GM10248 (cell line): ENCODE measurements at regions of chr11 and their contacts with region 1.

Region 1: DNA sequence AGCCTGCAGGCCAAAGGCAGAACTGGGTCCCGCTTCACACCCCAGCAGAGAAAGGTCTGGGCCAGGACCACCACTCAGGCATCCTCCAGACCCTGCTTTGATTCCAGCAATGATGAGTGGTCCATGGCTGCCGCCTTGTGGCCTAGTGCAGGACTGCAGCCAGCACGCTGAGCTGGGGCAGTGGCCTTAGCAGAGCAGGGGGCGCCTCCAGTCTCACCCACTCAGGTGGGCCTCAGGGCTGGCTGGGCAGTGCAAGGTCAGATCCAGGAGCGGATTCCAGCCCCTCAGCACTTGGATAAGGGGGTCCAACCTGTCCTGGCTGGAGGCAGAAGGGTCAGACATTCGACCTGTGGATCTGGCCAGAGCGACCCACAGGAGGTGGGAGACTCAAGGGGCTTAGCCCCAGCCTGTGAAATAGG is 9.6 kb upstream of the PDE2A start:
- DNase-seq: peak; percentile 85
- CTCF ChIP-seq: peak; percentile 96

Region 2: DNA sequence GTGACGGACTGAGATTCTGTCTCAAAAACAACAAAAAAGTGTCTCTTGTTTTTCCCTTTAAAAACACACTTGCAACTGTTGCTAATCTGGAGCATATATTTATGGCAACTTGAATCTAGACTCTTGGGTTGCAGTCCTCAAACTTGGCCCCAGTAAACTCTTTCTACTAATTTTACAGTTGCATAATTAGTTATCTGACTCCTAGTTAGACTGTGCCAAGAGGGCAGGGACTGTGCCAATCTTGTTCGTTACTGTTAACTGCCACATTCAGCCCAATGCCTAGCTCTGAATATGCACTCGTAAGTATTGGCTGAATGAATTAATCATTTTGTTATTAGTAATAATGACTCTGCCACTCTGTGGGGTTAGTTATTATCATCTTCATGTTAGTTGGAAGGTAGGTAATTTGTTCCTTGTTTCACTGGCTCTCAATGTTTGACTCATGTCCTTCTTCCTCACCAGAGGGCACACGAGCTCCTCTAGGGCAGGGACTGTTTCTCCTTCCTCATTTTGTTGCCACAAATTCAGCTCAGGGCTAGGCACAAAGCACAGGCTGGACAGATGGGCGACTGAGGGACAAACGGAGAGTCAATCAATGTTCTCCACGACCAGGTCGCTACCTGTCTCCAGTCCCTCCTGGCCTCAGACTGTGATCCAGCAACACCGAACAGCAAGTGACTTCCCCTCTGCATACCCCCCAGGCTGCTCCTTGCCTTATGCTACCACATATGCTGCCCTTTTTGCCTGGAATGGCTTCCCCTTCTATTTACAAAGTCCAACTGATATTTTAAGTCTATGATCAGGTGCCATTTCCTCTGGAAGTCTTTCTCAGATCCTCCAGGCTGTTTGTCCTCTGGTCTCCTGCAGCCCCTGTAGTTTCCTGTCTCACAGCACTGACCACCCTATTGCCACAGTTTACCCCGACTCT is 258.5 kb before region 1 on chr11:
- CTCF ChIA-PET with region 1: no interaction called
- POLR2A ChIA-PET with region 1: no interaction called
- DNase-seq: no peak
- CTCF ChIP-seq: no peak

Region 3: DNA sequence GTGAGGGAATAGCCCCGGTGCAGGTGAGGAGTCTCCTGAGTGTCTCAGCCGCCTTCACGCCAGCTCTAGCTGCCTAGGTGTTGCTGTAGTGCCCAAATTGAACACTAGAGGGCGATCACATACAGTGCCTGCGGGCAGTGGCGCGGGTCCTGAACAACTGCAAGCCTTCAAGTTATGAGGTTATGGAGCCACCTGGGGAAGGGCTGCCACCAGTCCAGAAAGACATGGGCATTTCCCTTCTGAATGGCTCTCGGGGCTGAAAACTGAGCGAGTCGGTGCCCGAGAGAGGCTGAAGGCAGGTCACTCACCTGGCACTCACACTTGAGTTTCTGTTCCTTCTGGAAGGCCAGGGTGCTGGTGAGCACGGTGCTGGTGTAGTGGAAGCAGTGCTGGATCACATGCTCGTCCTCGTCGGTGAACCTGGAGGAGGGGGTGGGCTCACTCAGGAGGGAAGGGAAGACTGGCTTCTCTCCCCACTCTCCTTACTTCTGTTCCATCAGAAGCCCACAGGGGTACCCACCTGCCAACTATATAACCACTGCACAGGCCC is 98.0 kb before region 1 on chr11:
- CTCF ChIA-PET with region 1: interaction called, 34 read pairs
- POLR2A ChIA-PET with region 1: no interaction called
- DNase-seq: peak; percentile 85
- CTCF ChIP-seq: peak; percentile 82

Region 4: GRCh38 chr11:72591785-72592490 is 91.9 kb before region 1 on chr11:
- CTCF ChIA-PET with region 1: interaction called, 34 read pairs
- POLR2A ChIA-PET with region 1: no interaction called
- DNase-seq: no peak
- CTCF ChIP-seq: no peak

Region 5: DNA sequence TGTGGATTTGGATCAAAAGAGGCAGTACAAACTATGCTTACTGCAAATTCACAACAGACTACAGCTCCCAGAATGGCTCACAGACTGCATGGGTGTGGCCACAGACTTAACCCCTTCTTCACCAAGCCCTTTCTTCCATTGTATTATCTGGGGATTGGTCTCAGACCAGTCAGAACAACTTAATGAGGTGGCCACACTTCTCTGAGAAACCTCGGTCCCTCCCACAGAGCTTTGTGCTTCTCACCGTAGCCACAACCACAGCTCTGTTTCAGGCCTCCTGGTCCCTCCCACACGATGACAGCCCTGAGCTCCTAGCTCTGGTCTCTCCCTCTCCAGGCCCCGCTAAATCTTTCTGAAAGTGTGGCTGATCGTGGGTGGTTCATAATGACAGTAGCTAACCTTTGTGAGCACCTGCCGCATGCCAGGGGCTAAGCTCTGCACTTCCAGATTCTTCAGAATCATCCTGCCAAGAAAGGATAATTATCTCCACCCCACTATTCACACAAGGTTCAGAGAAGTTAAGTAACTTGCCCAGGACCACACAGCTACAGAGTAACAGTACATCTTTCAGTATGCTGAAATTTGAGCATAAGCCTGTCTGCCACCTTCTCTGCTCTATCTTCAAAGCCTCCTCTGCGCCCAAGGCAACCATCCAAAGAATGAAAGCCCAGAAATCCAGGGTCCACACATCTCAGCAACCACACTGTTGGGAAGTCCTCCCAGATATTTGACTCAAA is 15.0 kb before region 1 on chr11:
- CTCF ChIA-PET with region 1: interaction called, 117 read pairs
- POLR2A ChIA-PET with region 1: interaction called, 3 read pairs
- DNase-seq: peak; percentile 91
- CTCF ChIP-seq: no peak

Region 6: DNA sequence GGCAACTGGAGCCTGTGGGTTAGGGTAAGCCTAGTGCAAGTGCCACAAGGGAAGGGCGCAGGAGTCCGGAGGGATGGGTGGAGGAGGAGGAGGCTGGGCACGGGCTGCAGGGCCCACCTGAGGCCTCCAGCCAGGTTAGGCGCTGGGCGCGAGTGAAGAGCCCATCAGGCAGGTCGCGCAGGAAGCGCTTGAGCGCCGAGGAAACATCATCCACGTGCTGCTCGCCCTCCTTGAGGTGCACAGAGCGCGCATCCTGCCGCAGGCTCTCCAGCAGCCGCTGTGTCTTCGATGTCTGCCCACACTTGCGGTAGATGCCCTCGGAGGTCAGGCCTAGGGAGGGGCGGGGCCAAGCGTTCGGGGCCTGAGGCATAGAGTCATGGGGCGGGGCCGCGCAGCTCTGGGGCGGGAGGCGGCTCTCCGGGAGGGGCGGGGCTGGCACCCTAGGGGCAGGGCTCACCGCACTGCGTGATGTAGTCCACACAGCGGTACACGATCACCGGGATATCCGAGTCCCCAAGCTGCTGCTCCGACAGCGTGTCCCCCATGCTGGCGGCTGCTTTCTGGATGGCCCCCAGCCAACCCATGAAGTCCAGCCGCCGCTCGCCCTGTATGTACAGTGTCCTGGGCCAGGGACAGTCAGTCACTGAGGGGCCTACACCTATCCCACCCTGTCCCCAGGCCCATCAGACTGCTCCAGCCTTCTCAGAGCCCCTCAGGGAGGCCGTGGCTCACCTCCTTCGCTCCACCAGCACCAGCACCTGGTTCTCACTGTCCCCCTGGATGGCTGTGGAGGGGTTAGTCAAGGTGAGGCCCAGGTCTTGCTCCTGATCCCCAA is 13.3 kb after region 1 on chr11:
- CTCF ChIA-PET with region 1: interaction called, 43 read pairs
- POLR2A ChIA-PET with region 1: no interaction called
- DNase-seq: no peak
- CTCF ChIP-seq: no peak

Region 7: GRCh38 chr11:72709478-72710238 is 25.9 kb after region 1 on chr11:
- CTCF ChIA-PET with region 1: interaction called, 10 read pairs
- POLR2A ChIA-PET with region 1: no interaction called
- DNase-seq: no peak
- CTCF ChIP-seq: no peak

Region 8: DNA sequence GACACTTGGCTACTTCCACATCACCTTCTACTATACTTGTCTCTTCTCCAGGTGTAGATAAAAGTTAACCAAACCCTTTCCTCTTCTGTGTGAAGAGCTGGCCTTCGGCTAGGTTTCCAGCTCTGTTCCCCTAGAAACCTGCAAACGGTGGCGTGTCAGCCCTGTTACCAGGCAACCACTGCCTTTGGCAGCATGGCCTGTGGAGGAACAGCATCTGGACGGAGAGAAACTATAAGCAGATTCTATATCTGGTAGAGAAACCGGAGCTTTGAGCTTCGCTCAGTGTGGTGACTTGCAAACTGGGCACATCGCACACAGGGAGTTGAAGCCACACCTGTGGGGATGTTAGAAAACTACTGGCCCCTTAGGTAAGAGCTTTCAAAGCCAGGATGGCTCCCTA is 32.5 kb after region 1 on chr11:
- CTCF ChIA-PET with region 1: interaction called, 10 read pairs
- POLR2A ChIA-PET with region 1: no interaction called
- DNase-seq: no peak
- CTCF ChIP-seq: no peak